Ascending aorta (tissue), 2 donors: ENCODE measurements at regions of chr12 and their contacts with region 1.

Region 1: GRCh38 chr12:13661005-13661887 is 320.2 kb downstream of the GRIN2B start:
- DNase-seq: peak in 1 of 2 donors; percentile 64
- H3K4me3 ChIP-seq: no peak overlapping the region
- H3K27ac ChIP-seq: no peak overlapping the region
- H3K4me1 ChIP-seq: no peaks in the 10 kb centered on the region
- H3K27me3 ChIP-seq: no peaks in the 10 kb centered on the region
- CTCF ChIP-seq: peak in 2 of 3 experiments; percentile 73

Region 2: GRCh38 chr12:13278249-13278787 is 382.9 kb before region 1 on chr12:
- intact Hi-C with region 1: loop called (anchors 1 kb)
- DNase-seq: peak in 1 of 2 donors; percentile 80
- H3K4me3 ChIP-seq: peak overlapping the region; percentile 44 to 48
- H3K27ac ChIP-seq: no peak overlapping the region
- H3K4me1 ChIP-seq: peaks cover 0 to 6% of the 10 kb centered on the region in 2 donors
- H3K27me3 ChIP-seq: no peaks in the 10 kb centered on the region
- CTCF ChIP-seq: peak; percentile 62 to 99 (median 98)